Activated naive CD4-positive, alpha-beta T cell treated with anti-CD3 and anti-CD28 coated beads, Interleukin-2, amount 10 ng/mL, durations not matched to agents 7 days and 5 days (primary cell): ENCODE measurements at regions of chr4 and their contacts with region 1.

Region 1: DNA sequence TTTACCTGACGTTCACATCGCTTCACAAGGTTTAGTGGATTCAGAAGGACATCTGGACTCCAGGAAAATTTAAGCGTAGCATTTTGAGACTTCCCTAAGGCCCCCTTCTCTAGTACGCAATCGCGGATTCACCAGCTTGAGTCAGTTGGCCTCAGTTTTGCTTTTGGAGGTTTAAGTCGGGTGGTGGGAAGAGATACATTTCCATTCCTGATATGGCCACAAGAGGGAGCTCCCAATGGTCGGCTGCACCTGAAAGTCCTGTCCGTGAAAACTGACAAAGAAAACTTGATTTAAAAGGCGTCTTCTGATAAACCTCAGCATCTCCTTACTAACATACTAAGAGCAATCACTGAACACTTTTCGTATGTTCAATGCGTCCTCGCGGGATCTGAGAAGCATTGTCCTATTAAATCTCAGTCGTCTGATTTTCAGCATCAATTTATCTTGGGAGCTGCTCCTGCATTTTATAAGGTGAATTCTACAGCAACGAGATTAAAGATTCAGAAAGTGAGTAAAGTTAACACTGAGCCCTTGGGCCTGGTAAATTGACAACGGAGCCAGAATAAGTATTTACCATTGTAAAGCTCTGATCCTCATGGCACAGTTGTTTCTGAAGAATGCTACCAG is 50.6 kb downstream of the LGI2 start:
- DNase-seq: peak; percentile 61
- H3K4me3 Mint-ChIP-seq: no peak overlapping the region
- H3K27ac Mint-ChIP-seq: no peak overlapping the region
- H3K4me1 Mint-ChIP-seq: peaks cover 10% of the 10 kb centered on the region
- H3K27me3 Mint-ChIP-seq: peaks cover 36% of the 10 kb centered on the region

Region 2: DNA sequence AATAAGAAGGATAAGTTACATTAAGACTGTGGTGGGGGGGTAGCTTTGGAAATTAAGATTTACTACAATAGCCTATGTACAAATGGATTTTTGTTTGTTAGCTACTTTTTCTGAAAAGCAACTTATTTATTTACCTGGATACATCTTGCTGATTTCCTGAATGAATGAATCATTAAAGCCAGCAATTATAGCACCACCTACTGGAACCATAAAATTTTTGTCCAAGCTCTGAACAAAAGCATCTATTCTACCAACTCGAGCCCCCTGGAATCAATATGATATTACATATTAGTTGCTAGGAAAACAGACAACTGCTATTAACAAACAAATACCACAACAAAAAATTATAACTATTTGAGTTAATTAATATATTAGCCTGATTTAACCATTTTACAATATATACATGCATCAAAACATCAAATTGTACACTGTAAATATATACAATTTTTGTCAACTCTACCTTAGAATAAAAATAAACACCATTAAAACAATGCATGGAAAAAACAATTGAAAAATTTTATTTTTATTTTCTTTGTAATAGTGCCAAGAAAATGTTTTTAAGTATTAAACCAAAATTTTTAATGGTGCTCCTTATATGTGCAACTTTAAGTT is 164.8 kb after region 1 on chr4:
- CTCF ChIA-PET with region 1: interaction called, 23 read pairs
- DNase-seq: no peak
- H3K4me3 Mint-ChIP-seq: no peak overlapping the region
- H3K27ac Mint-ChIP-seq: no peak overlapping the region
- H3K4me1 Mint-ChIP-seq: no peaks in the 10 kb centered on the region
- H3K27me3 Mint-ChIP-seq: no peaks in the 10 kb centered on the region

Region 3: GRCh38 chr4:25177147-25177546 is 197.0 kb after region 1 on chr4:
- CTCF ChIA-PET with region 1: no interaction called
- DNase-seq: no peak
- H3K4me3 Mint-ChIP-seq: no peak overlapping the region
- H3K27ac Mint-ChIP-seq: no peak overlapping the region
- H3K4me1 Mint-ChIP-seq: peaks cover 20% of the 10 kb centered on the region
- H3K27me3 Mint-ChIP-seq: no peaks in the 10 kb centered on the region